Naive thymus-derived CD4-positive, alpha-beta T cell (primary cell): ENCODE measurements at regions of chr20 and their contacts with region 1.

Region 1: DNA sequence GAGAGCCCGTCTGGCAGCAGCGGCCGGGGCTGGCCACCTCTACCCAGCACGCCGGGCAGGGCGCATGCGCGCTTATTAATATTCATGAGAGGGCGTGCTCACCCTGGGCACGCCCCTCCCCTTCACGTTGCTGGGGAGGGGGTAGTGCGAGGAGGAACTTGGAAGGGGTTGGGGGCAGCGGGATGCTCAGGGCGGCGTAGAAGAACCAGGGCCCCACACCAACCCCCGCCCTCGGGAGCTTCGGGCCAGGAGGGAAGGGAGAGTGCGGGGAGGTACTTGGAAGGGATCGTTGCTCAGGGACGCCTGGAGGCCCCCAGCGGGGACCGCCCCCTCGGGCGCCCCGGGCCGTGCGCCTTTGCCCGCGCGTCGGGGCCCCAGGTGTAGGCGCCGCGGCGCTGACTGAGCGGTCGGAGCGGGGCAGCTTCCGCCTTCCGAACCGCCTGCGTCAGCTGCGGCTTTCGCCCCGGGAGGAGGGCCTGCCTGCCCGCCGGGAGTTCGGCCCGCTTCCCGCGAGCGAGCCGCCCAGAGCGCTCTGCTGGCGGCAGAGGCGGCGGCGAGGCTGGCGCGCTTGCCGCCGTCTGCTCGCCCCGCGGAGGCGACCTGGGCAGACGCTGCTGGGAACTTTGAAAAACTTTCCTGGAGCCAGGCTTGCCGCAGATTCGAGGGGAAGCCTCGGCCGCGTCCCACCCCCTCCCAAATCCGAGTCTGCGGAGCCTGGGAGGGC is at the start of gene JAG1:
- DNase-seq: peak in 2 of 9 donors; percentile 51 to 86
- ATAC-seq: peak; percentile 74
- H3K4me3 ChIP-seq: peak within 1 kb of the TSS; percentile 30
- H3K4me3 Mint-ChIP-seq: peak within 1 kb of the TSS; percentile 48 to 94 (median 74)
- H3K27ac ChIP-seq: no peak within 1 kb of the TSS
- H3K27ac Mint-ChIP-seq: peak within 1 kb of the TSS in 1 of 9 donors; percentile 82
- H3K4me1 ChIP-seq: no peaks in the 10 kb centered on the region
- H3K4me1 Mint-ChIP-seq: peaks cover 0 to 27% (median 18%) of the 10 kb centered on the region in 7 donors
- H3K27me3 ChIP-seq: peaks cover 11 to 12% of the 10 kb centered on the region in 2 donors
- H3K27me3 Mint-ChIP-seq: peaks cover 59 to 77% (median 59%) of the 10 kb centered on the region in 5 donors
- total RNA-seq, gene JAG1: 0.46 to 7.0 (median 2.6) TPM in 3 of 5 experiments, not detected in the others

Region 2: DNA sequence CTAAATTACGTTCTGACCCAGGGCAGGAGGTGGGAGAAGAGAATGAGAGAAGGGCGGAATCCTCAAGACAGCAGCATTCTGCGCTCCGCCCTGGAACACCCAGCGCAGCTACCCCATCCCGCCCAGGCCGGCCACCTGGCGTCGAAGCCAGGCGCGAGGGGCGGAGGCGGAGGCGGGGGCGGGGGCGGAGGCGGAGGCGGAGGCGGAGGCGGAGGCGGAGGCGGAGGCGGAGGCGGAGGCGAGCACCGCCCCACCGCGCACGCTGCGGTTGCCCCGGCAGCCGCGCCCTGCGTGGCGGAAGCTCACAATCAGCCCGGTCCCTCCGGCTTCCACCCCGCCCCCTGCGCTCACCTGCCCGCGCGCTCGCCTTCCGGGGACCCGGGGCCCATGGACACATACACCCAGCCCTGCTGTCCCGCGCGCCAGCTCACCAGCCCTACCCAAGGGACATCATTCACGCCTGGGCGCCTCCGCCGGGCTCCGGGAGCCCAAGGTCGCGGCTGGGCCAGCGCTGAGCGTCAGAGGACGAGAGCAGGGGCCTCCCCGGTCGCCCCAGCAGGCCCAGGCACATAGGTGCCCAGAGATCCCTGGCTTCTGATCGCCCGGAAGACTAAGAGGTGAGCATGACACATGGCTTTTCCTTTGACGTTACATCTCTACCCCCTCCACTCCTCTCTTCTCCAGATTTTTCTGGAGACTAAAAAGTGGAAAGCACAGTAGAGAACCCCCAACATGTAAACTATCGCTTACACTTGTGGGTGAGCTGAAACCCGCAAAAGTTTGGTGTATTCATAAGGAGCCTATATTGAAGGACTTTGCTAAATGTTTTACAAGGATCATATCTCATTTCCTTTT is 639.2 kb before region 1 on chr20 and contains the start of gene ANKEF1:
- CTCF ChIA-PET with region 1: no interaction called
- POLR2A ChIA-PET with region 1: no interaction called
- intact Hi-C with region 1: loop called in 1 of 2 experiments (anchors 5 kb)
- DNase-seq: peak; percentile 62 to 88 (median 81)
- ATAC-seq: peak; percentile 99
- H3K4me3 ChIP-seq: peak within 1 kb of the TSS; percentile 87
- H3K4me3 Mint-ChIP-seq: peak within 1 kb of the TSS; percentile 60 to 88 (median 79)
- H3K27ac ChIP-seq: peak within 1 kb of the TSS; percentile 71
- H3K27ac Mint-ChIP-seq: peak within 1 kb of the TSS; percentile 21 to 88 (median 73)
- H3K4me1 ChIP-seq: peaks cover 8 to 12% of the 10 kb centered on the region in 2 donors
- H3K4me1 Mint-ChIP-seq: peaks cover 6 to 27% (median 13%) of the 10 kb centered on the region in 7 donors
- H3K27me3 ChIP-seq: no peaks in the 10 kb centered on the region
- H3K27me3 Mint-ChIP-seq: peaks cover 6 to 11% (median 10%) of the 10 kb centered on the region in 5 donors
- total RNA-seq, gene ANKEF1: 1.5 to 6.7 (median 2.9) TPM

Region 3: DNA sequence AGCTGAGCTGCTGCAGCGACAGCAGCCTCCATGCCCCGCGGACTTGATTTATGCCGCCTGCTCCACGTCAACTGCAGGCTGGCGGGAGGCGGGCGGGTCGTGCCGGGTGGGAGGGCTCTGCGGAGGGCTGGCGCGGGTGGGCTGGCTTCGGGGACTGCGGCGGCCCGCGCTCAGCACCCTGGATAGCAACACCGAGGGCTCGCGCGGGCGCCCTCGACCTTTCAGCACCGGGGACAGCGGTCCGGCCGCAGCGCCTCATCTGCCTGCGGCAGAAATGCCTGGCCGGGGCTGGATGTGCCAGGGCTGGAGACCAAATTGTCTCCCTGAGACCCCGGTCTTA is 454.7 kb before region 1 on chr20:
- CTCF ChIA-PET with region 1: no interaction called
- POLR2A ChIA-PET with region 1: no interaction called
- intact Hi-C with region 1: loop called in 1 of 2 experiments (anchors 2 kb)
- DNase-seq: peak; percentile 25 to 80 (median 51)
- ATAC-seq: peak; percentile 90
- H3K4me3 ChIP-seq: no peak overlapping the region
- H3K4me3 Mint-ChIP-seq: peak overlapping the region in 7 of 10 donors; percentile 20 to 73 (median 67)
- H3K27ac ChIP-seq: no peak overlapping the region
- H3K27ac Mint-ChIP-seq: no peak overlapping the region
- H3K4me1 ChIP-seq: no peaks in the 10 kb centered on the region
- H3K4me1 Mint-ChIP-seq: peaks cover 5 to 25% (median 16%) of the 10 kb centered on the region in 7 donors
- H3K27me3 ChIP-seq: peaks cover 0 to 4% of the 10 kb centered on the region in 2 donors
- H3K27me3 Mint-ChIP-seq: peaks cover 31 to 84% (median 65%) of the 10 kb centered on the region in 5 donors

Region 4: DNA sequence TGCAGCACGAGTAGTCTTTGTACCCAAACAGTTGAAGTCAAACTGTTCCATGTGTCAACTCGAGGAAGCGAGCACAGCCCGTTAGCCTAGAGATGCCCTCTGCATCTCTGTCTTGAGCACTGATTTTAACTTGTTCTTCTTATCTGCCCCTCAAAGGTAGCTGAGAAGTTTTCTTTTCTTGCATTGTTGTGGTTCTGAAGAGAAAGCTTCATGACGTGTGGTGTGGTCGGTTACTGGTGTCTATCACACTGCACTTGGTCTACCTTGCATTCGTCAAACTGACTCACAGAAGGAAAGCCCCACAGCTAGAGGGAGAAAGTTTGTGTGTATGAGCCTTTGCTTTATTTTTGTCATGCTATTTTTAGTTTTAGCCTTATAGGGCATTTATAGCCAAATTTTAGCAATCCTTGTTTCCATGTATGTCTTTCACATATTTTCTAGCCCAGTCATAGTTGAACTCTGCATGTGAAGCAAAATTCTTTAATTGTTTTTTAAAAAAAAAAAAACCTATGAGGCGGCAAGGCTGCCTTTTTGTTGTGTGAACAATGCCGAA is 115.4 kb before region 1 on chr20:
- CTCF ChIA-PET with region 1: no interaction called
- POLR2A ChIA-PET with region 1: no interaction called
- intact Hi-C with region 1: loop called in 1 of 2 experiments (anchors 2 kb)
- DNase-seq: peak in 5 of 9 donors; percentile 4 to 45 (median 11)
- ATAC-seq: peak; percentile 78
- H3K4me3 ChIP-seq: no peak overlapping the region
- H3K4me3 Mint-ChIP-seq: peak overlapping the region in 1 of 10 donors; percentile 57
- H3K27ac ChIP-seq: no peak overlapping the region
- H3K27ac Mint-ChIP-seq: peak overlapping the region in 4 of 9 donors; percentile 18 to 45 (median 26)
- H3K4me1 ChIP-seq: no peaks in the 10 kb centered on the region
- H3K4me1 Mint-ChIP-seq: peaks cover 5 to 36% (median 13%) of the 10 kb centered on the region in 7 donors
- H3K27me3 ChIP-seq: no peaks in the 10 kb centered on the region
- H3K27me3 Mint-ChIP-seq: peaks cover 0 to 2% (median 0%) of the 10 kb centered on the region in 5 donors